Cardiac septum (tissue), 1 donor: ENCODE measurements at regions of chr5 and their contacts with region 1.

Region 1: GRCh38 chr5:170006021-170006420 is 25.7 kb upstream of the INSYN2B start:
- DNase-seq: no peak

Region 2: DNA sequence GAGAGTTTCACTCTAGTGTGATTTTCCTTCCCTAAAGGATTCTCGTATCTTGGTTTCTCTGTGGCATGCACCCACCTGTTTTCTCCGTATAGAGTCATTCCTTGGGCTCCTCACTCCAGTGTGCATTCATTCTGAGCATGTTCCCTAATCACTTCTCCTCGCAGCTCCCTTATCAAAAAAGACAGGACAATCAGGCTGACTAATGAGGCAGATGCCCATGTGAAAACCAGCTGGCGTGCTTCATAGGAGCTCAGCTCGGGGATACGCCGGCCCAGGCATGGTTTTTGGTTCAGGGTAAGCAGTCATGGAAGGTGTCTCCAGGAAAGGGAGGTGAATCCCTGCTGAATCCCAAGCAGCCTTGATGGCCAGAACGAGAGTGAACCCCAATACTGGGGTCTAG is 15.5 kb after region 1 on chr5:
- intact Hi-C with region 1: loop called (anchors 1 kb)
- DNase-seq: no peak

Region 3: GRCh38 chr5:170034231-170034630 is 28.2 kb after region 1 on chr5:
- intact Hi-C with region 1: no loop called
- DNase-seq: no peak